ENCODE measurements at regions of chr11 and their contacts with region 1.

Region 1: GRCh38 chr11:47485110-47485509 is 36.2 kb upstream of the RAPSN start:
- DNase-seq: no peak
- H3K4me3 Mint-ChIP-seq: no peak overlapping the region
- H3K27ac Mint-ChIP-seq: no peak overlapping the region
- H3K4me1 Mint-ChIP-seq: peaks cover 12% of the 10 kb centered on the region
- H3K27me3 Mint-ChIP-seq: no peaks in the 10 kb centered on the region

Region 2: GRCh38 chr11:47523468-47524225 is 38.5 kb after region 1 on chr11:
- CTCF ChIA-PET with region 1: no interaction called
- intact Hi-C with region 1: loop called (anchors 5 kb)
- DNase-seq: peak; percentile 82
- H3K4me3 Mint-ChIP-seq: peak overlapping the region; percentile 57
- H3K27ac Mint-ChIP-seq: peak overlapping the region; percentile 90
- H3K4me1 Mint-ChIP-seq: peaks cover 79% of the 10 kb centered on the region
- H3K27me3 Mint-ChIP-seq: no peaks in the 10 kb centered on the region

Region 3: GRCh38 chr11:47616726-47617416 is 131.8 kb after region 1 on chr11:
- CTCF ChIA-PET with region 1: interaction called, 4 read pairs
- intact Hi-C with region 1: loop called (anchors 5 kb)
- DNase-seq: peak; percentile 66
- H3K4me3 Mint-ChIP-seq: no peak overlapping the region
- H3K27ac Mint-ChIP-seq: no peak overlapping the region
- H3K4me1 Mint-ChIP-seq: no peaks in the 10 kb centered on the region
- H3K27me3 Mint-ChIP-seq: no peaks in the 10 kb centered on the region

Region 4: GRCh38 chr11:47858169-47858543 is 373.0 kb after region 1 on chr11:
- CTCF ChIA-PET with region 1: no interaction called
- intact Hi-C with region 1: loop called (anchors 10 kb)
- DNase-seq: no peak
- H3K4me3 Mint-ChIP-seq: no peak overlapping the region
- H3K27ac Mint-ChIP-seq: no peak overlapping the region
- H3K4me1 Mint-ChIP-seq: peaks cover 19% of the 10 kb centered on the region
- H3K27me3 Mint-ChIP-seq: no peaks in the 10 kb centered on the region